Astrocyte of the cerebellum (primary cell): ENCODE measurements at regions of chr7 and their contacts with region 1.

Region 1: GRCh38 chr7:87404674-87405073 is 59.2 kb downstream of the CROT start:
- DNase-seq: no peak
- H3K4me3 ChIP-seq: no peak overlapping the region
- CTCF ChIP-seq: no peak

Region 2: DNA sequence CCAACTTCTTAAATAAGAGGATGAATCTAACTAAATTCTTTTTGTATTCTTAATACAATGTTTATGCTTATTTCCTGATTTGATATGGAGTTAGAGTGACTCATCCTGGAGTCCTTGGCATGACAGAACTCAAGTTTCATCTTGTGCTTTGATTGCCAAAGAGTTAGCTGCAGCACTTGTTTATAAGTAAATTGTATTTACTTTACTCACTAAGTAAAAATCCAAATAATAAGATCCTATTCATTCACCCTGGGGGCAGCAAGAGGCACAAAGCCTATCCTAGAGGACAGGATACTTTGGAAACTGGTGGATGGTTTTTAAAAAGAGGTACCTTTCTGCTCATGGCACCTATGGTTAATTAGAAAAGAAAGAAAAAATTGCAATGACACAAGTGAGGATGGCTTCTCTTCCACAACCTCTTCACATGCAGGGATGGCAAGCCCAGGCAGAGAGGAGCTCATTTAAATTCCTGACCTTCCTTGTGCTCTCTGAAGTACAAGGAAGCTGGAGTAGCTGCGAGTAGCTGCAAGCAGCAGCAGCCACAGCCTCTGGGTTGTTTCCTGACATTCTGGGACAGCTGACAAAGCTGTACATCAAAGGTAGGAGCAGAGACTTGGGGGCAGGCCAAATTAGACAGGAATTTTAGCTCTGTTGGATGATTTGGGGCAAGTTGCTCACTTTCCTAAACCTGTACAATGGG is 87.7 kb before region 1 on chr7:
- in situ Hi-C with region 1: loop called (anchors 5 kb)
- DNase-seq: peak; percentile 64
- H3K4me3 ChIP-seq: no peak overlapping the region
- CTCF ChIP-seq: no peak

Region 3: DNA sequence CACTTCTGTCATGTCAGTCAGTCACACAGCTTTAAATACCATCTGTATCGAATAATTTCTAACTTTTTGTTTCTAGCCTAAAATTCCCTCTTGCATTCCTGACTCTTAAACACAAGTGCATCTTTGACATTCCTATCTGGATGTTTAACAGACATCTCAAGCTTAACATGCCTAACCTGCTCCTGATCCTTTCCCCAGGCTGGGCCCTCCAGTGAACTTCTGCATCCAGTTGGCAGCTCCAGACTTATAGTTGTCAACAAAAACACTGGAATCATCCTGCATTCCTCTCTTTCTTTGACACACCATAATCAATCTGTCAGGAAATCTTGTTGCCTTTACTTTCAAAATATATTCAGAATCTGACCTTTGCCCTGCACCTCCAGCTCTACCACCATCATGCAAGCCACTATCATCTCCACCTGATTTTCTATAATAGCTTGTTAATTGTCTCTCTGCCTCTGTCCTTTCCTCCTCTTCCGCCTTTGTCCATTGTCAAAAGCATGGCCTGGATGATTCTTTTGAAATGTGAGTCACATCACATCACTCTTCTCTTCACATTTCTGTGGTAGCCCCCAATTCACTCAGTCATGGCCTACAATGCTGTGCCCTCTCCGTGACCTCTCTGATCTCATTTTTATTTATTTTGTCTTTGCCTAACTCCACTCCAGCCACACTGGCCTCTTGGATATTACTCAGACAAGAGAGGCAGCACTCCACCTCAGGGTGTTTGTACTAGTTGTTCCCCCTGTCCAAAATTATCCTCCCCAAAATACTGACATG is 75.5 kb after region 1 on chr7:
- in situ Hi-C with region 1: no loop called
- DNase-seq: no peak
- H3K4me3 ChIP-seq: no peak overlapping the region
- CTCF ChIP-seq: no peak